ENCODE measurements at regions of chr5 and their contacts with region 1.

Region 1: GRCh38 chr5:130871346-130872086 is 293.5 kb downstream of the HINT1 start:
- DNase-seq: peak; percentile 39

Region 2: GRCh38 chr5:130885027-130885426 is 13.5 kb after region 1 on chr5:
- CTCF ChIA-PET with region 1: interaction called, 10 read pairs
- POLR2A ChIA-PET with region 1: no interaction called
- DNase-seq: no peak

Measured in HEK293T (cell line).